AG04450 (cell line): ENCODE measurements at regions of chr19 and their contacts with region 1.

Region 1: GRCh38 chr19:47514869-47515588 is at the start of gene NAPA:
- DNase-seq: peak; percentile 100
- H3K4me3 ChIP-seq: peak within 1 kb of the TSS; percentile 98
- H3K27ac ChIP-seq: peak within 1 kb of the TSS; percentile 96
- H3K27me3 ChIP-seq: peaks cover 6% of the 10 kb centered on the region
- CTCF ChIP-seq: no peak
- polyA plus RNA-seq, gene NAPA: 84.1 and 102 TPM in 2 replicates

Region 2: DNA sequence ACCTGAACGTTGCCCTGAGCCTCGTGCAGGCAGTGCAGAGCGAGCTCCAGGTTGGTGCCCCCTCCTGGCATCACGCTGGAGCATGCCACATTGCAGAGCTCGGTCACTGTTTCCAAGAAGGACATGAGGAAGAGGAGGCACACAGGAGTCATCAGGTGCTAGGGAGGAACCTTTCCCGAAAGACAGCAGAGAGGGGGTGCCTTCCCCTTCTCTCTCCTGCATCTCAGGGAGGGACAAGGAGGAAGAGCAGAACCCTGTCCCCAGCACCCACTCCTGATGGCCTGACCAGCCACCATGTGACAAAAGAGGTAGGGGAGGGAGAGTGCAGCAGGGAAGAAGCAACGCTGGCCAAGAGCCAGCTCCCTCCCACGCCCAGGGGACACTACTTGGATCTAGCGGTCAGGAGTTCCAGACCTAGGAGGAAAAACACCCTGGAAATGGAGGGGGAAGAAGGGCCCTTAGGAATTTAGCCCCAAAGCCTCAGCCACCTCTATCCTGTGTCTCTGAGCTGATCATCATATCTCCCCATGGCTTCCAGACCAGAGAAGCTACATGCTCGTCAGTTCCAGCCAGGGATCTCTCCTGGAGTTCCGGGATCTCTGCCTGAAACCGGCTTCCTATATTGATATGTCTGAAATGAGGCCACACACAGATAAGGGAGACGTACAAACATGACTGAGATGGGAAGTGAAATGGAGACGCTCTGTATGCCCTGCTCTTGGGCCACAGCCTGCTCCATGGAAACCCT is 16.8 kb after region 1 on chr19:
- CTCF ChIA-PET with region 1: interaction called, 19 read pairs
- POLR2A ChIA-PET with region 1: interaction called, 3 read pairs
- DNase-seq: no peak
- H3K4me3 ChIP-seq: no peak overlapping the region
- H3K27ac ChIP-seq: no peak overlapping the region
- H3K27me3 ChIP-seq: peaks cover 13% of the 10 kb centered on the region
- CTCF ChIP-seq: no peak

Region 3: DNA sequence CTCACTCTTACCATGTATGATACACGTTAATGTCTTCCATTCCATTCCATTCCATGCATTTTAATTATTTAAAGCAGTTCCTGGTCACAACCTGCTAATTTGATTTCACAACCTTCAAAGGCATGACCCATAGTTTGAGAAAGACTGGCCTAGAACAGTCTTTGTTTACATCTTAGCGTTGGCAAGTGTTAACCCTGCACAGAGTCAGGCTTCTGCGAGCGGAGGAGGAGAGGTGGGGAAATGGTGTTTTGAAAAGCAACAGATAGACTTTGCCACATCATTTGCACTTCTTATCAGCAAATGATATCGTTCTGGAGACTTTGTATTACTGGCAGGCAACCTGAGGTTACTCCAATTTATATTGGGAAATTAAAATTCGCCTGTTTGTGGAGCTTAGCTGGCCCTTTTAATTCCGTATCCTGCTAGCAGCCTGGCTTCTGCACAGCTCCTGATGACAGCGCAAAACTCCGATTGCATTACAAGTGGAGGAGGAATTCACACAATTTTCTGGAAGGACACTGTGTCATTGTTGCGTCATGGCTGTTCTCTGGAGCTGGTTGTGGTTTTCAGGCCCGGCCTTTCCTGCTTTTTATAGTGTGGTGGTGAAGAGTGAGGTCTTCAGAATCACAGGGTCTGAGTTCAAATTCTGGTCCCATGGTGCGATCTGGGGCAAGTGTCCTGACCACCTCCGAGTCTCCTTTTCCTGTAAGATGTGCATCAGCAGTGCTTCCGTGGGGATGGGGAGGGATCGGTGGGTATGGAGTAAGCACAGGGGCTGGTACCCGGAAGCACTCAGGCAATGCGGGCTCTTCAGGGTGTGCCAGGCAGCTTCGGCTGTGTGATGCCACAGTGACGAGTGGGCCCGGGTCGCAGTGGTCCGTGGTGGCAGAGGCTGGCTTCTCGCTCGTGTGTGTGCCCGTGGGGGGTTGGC is 149.1 kb after region 1 on chr19:
- CTCF ChIA-PET with region 1: interaction called, 13 read pairs
- POLR2A ChIA-PET with region 1: interaction called, 6 read pairs
- DNase-seq: peak; percentile 91
- H3K4me3 ChIP-seq: peak overlapping the region; percentile 37
- H3K27ac ChIP-seq: peak overlapping the region; percentile 100
- H3K27me3 ChIP-seq: no peaks in the 10 kb centered on the region
- CTCF ChIP-seq: no peak

Region 4: DNA sequence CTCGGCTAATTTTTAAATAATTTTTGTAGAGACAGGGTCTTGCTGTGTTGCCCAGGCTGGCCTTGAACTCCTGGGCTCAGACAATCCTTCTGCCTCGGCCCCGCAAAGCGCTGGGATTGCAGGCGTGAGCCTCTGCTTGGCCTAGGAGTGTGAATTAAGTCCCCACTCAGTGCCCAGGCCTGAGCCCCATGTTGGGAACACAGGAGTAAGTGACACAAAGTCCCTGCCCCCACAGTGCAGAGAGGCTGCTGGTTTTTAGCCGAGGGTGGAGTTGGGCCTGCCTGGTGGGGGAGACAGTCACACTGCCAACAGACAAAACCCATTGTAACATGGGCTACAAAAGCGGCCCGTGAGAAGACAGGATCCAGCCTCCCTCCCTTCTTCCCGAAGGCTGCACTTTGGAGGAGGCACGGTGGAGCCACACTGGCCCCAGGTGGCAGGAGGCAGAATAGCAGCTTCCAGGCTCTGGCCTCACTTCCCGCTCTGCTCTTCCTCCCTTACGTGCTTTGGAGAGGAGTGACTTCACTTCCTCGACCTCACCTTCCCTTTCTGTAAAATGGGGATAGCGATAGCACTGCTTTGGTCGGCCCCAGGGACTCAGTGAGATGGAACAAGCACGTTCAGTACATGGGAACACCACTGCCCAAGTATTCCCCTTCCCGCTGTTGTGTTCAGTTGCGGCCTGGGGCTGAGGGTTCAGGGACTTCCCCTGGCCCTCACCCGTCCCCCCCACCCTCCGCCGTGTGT is 183.0 kb after region 1 on chr19:
- CTCF ChIA-PET with region 1: interaction called, 15 read pairs
- POLR2A ChIA-PET with region 1: no interaction called
- DNase-seq: peak; percentile 53
- H3K4me3 ChIP-seq: no peak overlapping the region
- H3K27ac ChIP-seq: peak overlapping the region; percentile 11
- H3K27me3 ChIP-seq: no peaks in the 10 kb centered on the region
- CTCF ChIP-seq: peak; percentile 100